CD8-positive, alpha-beta memory T cell (primary cell): ENCODE measurements at regions of chr19 and their contacts with region 1.

Region 1: DNA sequence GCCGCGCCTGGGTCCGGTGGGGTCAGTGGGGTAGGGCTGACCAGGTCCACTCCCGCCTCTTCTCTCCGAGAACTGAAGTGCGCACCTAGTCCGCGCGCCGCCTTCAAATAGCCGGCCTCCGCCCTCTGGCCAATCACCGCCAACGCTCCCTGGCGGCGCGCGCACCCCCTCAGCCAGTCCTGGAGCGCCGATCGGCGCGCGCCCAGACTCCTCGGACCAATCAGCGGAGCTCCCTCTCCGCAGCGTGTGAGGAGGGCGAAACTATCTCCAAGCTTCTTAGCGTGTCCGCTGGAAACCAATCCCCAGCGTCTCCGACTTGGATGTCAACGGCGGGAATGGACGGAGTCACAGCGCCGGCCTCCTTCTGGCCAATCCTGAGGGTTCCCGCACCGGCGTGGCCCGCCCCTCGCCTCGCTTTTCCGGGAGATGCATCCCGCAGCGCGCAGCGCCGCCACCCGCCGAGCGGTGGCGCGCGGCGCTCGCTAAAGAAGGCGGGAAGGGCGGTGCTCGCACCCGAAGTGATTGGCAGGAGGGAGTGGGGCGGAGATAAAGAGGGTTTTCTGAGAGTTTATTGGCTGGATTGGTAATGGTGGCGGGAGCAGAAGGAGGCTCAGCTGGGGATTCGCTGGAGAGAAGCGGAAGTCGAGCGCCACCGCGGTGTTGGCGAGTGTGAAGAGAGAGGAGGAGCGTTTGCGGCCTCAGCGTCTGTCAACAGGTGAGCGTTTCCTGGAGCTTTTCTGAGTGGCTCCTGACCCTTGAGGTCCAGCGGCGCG is at the start of gene ASF1B:
- DNase-seq: peak; percentile 93 to 99 (median 99)
- H3K4me3 ChIP-seq: peak within 1 kb of the TSS; percentile 85
- H3K4me3 Mint-ChIP-seq: peak within 1 kb of the TSS; percentile 83 to 94 (median 90)
- H3K27ac ChIP-seq: peak within 1 kb of the TSS; percentile 93
- H3K27ac Mint-ChIP-seq: peak within 1 kb of the TSS; percentile 70 to 98 (median 94)
- H3K4me1 ChIP-seq: peaks cover 15% of the 10 kb centered on the region
- H3K4me1 Mint-ChIP-seq: peaks cover 16 to 32% (median 29%) of the 10 kb centered on the region in 3 donors
- H3K27me3 ChIP-seq: no peaks in the 10 kb centered on the region
- H3K27me3 Mint-ChIP-seq: no peaks in the 10 kb centered on the region
- total RNA-seq, gene ASF1B: 75.0 to 76.2 TPM

Region 2: DNA sequence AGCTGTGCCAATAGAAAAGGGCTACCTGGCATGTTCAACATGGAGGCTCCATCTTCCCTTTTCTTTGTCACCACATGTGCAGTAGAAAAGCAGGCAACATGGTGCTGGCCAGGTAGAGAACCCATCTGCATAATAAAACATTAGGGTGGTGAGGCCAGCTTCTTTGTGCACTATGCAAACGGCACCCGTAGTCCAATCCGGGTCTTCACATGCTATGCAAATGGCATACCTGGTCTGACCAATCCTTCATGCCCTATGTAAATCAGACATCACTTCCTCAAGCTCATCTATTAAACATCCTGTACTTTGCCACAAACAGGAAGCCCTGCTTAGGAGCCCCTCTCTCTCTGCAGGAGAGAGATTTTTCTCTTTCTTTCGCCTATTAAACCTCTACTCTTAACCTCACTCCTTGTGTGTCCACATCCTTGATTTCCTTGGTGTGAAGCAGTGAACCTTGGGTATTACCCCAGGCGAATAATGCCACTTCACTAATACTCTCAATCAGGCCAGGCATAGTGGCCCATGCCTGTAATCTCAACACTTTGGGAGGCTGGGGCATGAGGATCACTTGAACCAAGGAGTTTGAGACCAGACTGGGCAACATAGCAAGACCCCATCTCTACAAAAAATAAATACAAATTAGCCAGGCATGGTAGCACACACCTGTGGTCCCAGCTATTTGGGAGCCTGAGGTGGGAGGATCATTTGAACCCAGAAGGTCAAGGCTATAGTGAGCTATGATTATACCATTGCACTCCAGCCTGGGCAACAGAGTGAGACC is 483.7 kb before region 1 on chr19:
- CTCF ChIA-PET with region 1: no interaction called
- POLR2A ChIA-PET with region 1: no interaction called
- DNase-seq: no peak
- H3K4me3 ChIP-seq: no peak overlapping the region
- H3K4me3 Mint-ChIP-seq: no peak overlapping the region
- H3K27ac ChIP-seq: no peak overlapping the region
- H3K27ac Mint-ChIP-seq: peak overlapping the region in 2 of 8 donors; percentile 2 to 32
- H3K4me1 ChIP-seq: peaks cover 8% of the 10 kb centered on the region
- H3K4me1 Mint-ChIP-seq: peaks cover 6 to 17% (median 8%) of the 10 kb centered on the region in 3 donors
- H3K27me3 ChIP-seq: no peaks in the 10 kb centered on the region
- H3K27me3 Mint-ChIP-seq: peaks cover 1 to 16% of the 10 kb centered on the region in 2 donors

Region 3: DNA sequence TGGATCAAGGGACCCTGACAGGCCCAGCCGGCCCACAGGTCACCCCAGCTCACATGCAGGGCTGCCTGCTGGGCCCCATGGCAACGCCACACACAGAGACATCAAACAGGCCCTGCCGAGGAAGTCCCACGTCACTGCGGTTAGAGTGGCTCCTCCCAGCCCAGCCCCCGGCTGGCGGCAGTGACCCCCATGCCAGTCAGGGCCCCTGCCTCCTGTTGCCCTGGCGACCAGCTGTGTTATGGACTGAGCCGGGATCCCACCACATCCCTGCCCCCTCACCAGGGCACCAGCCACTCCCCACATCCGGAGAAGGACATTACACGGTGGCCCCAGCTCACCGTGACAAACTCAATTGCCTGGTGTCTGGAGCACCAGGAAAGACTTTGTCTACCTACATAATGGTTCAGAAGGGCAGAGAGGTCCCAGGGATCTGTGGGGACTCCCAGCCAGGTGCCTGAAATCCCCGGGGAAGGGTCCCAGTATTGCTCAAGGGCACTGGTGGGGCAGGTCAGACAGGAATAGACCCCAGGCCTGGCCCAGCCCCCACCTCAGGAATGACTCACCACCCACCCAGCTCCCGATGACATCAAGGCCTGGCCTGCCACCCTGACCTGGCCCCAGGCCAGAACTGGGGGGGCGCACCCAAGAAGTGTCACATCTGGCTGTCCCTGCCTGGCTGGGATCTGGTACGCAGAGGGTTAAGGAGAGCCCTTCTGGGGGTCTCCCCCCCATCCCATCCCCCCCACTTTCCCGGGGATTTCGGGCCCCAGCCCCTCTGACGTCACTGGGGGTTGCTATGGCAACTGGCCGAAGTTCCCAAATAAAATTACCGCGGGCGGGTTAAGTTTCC is 289.9 kb before region 1 on chr19:
- CTCF ChIA-PET with region 1: no interaction called
- POLR2A ChIA-PET with region 1: interaction called, 16 read pairs
- DNase-seq: peak; percentile 94 to 100 (median 99)
- H3K4me3 ChIP-seq: peak overlapping the region; percentile 70
- H3K4me3 Mint-ChIP-seq: peak overlapping the region; percentile 83 to 92 (median 89)
- H3K27ac ChIP-seq: peak overlapping the region; percentile 100
- H3K27ac Mint-ChIP-seq: peak overlapping the region; percentile 99 to 100 (median 100)
- H3K4me1 ChIP-seq: peaks cover 62% of the 10 kb centered on the region
- H3K4me1 Mint-ChIP-seq: peaks cover 43 to 81% (median 45%) of the 10 kb centered on the region in 3 donors
- H3K27me3 ChIP-seq: no peaks in the 10 kb centered on the region
- H3K27me3 Mint-ChIP-seq: peaks cover 0 to 18% of the 10 kb centered on the region in 2 donors

Region 4: GRCh38 chr19:14073261-14073924 is 63.3 kb before region 1 on chr19:
- CTCF ChIA-PET with region 1: interaction called, 22 read pairs
- POLR2A ChIA-PET with region 1: interaction called, 15 read pairs
- DNase-seq: peak; percentile 68 to 85 (median 80)
- H3K4me3 ChIP-seq: peak overlapping the region; percentile 73
- H3K4me3 Mint-ChIP-seq: peak overlapping the region; percentile 91 to 94 (median 93)
- H3K27ac ChIP-seq: peak overlapping the region; percentile 64
- H3K27ac Mint-ChIP-seq: peak overlapping the region in 7 of 8 donors; percentile 78 to 98 (median 88)
- H3K4me1 ChIP-seq: peaks cover 33% of the 10 kb centered on the region
- H3K4me1 Mint-ChIP-seq: peaks cover 7 to 29% (median 15%) of the 10 kb centered on the region in 3 donors
- H3K27me3 ChIP-seq: no peaks in the 10 kb centered on the region
- H3K27me3 Mint-ChIP-seq: no peaks in the 10 kb centered on the region

Region 5: GRCh38 chr19:14117668-14118164 is 19.0 kb before region 1 on chr19 and contains the start of gene PRKACA:
- CTCF ChIA-PET with region 1: interaction called, 20 read pairs
- POLR2A ChIA-PET with region 1: interaction called, 6 read pairs
- DNase-seq: peak; percentile 97 to 99 (median 99)
- H3K4me3 ChIP-seq: peak within 1 kb of the TSS; percentile 60
- H3K4me3 Mint-ChIP-seq: peak within 1 kb of the TSS; percentile 92 to 98 (median 96)
- H3K27ac ChIP-seq: peak within 1 kb of the TSS; percentile 85
- H3K27ac Mint-ChIP-seq: peak within 1 kb of the TSS; percentile 96 to 100 (median 99)
- H3K4me1 ChIP-seq: peaks cover 34% of the 10 kb centered on the region
- H3K4me1 Mint-ChIP-seq: peaks cover 35 to 52% (median 35%) of the 10 kb centered on the region in 3 donors
- H3K27me3 ChIP-seq: no peaks in the 10 kb centered on the region
- H3K27me3 Mint-ChIP-seq: peaks cover 0 to 4% of the 10 kb centered on the region in 2 donors
- total RNA-seq, gene PRKACA: 77.3 to 81.0 TPM

Region 6: GRCh38 chr19:14167576-14168138 is 31.0 kb after region 1 on chr19:
- CTCF ChIA-PET with region 1: interaction called, 21 read pairs
- POLR2A ChIA-PET with region 1: interaction called, 7 read pairs
- DNase-seq: peak in 2 of 5 donors; percentile 20 to 40
- H3K4me3 ChIP-seq: peak overlapping the region; percentile 64
- H3K4me3 Mint-ChIP-seq: peak overlapping the region; percentile 73 to 92 (median 86)
- H3K27ac ChIP-seq: no peak overlapping the region
- H3K27ac Mint-ChIP-seq: peak overlapping the region; percentile 85 to 96 (median 92)
- H3K4me1 ChIP-seq: peaks cover 19% of the 10 kb centered on the region
- H3K4me1 Mint-ChIP-seq: peaks cover 23 to 28% (median 27%) of the 10 kb centered on the region in 3 donors
- H3K27me3 ChIP-seq: no peaks in the 10 kb centered on the region
- H3K27me3 Mint-ChIP-seq: no peaks in the 10 kb centered on the region

Region 7: DNA sequence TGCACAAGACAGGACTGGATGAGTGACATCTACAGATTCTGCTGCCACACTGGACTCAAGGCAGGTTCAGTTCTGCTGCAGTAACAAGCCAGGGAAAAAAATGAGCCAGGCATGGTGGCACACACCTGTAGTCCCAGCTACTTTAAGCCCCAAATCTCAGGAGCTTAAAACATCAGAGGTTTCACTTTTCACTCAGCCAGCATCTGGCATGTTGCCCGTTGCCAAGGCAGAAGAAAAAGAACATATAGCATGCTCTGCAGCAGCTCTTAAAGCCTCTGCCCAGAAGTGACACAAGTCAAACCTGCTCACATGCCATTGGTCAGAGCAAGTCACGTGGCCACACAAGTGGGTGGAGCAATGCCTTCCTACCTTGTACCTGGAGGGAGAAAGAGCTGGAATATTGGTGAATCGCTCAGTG is 229.8 kb after region 1 on chr19:
- CTCF ChIA-PET with region 1: interaction called, 18 read pairs
- POLR2A ChIA-PET with region 1: interaction called, 5 read pairs
- DNase-seq: peak; percentile 76 to 96 (median 92)
- H3K4me3 ChIP-seq: peak overlapping the region; percentile 46
- H3K4me3 Mint-ChIP-seq: peak overlapping the region; percentile 47 to 80 (median 70)
- H3K27ac ChIP-seq: peak overlapping the region; percentile 68
- H3K27ac Mint-ChIP-seq: peak overlapping the region; percentile 85 to 100 (median 100)
- H3K4me1 ChIP-seq: peaks cover 88% of the 10 kb centered on the region
- H3K4me1 Mint-ChIP-seq: peaks cover 60 to 79% (median 73%) of the 10 kb centered on the region in 3 donors
- H3K27me3 ChIP-seq: no peaks in the 10 kb centered on the region
- H3K27me3 Mint-ChIP-seq: peaks cover 0 to 13% of the 10 kb centered on the region in 2 donors

Region 8: DNA sequence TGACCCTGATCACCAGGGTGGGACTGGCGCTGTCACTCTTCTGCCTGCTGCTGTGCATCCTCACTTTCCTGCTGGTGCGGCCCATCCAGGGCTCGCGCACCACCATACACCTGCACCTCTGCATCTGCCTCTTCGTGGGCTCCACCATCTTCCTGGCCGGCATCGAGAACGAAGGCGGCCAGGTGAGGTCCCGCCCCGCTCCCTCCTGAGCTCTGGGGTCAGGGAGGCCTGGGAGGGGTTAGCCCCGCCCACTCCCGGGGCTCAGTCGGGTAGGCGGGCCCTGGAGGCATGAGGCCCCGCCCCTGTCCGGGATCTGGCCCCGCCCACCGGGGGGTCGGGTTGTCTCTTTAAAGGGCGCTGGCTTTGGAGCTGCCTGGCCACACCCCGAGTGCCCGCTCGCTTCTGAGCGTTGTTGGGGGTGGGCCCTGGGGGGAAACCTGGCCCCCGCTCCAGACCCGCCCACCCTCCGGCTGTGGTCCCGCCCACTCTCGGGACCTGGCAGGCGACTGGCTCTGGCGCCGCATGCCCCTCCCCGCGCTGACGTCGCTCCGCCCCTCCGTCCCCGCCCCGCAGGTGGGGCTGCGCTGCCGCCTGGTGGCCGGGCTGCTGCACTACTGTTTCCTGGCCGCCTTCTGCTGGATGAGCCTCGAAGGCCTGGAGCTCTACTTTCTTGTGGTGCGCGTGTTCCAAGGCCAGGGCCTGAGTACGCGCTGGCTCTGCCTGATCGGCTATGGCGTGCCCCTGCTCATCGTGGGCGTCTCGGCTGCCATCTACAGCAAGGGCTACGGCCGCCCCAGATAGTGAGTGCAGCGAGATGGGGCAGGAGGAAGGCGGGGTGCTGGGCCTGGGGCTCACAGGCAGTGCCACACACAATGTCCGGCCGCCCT is 269.3 kb after region 1 on chr19:
- CTCF ChIA-PET with region 1: interaction called, 14 read pairs
- POLR2A ChIA-PET with region 1: interaction called, 5 read pairs
- DNase-seq: peak; percentile 86 to 91 (median 88)
- H3K4me3 ChIP-seq: no peak overlapping the region
- H3K4me3 Mint-ChIP-seq: peak overlapping the region in 3 of 7 donors; percentile 19 to 83 (median 77)
- H3K27ac ChIP-seq: no peak overlapping the region
- H3K27ac Mint-ChIP-seq: peak overlapping the region in 7 of 8 donors; percentile 59 to 97 (median 87)
- H3K4me1 ChIP-seq: peaks cover 40% of the 10 kb centered on the region
- H3K4me1 Mint-ChIP-seq: peaks cover 11 to 55% (median 26%) of the 10 kb centered on the region in 3 donors
- H3K27me3 ChIP-seq: no peaks in the 10 kb centered on the region
- H3K27me3 Mint-ChIP-seq: peaks cover 0 to 13% of the 10 kb centered on the region in 2 donors